A673 (cell line): ENCODE measurements at regions of chr10 and their contacts with region 1.

Region 1: DNA sequence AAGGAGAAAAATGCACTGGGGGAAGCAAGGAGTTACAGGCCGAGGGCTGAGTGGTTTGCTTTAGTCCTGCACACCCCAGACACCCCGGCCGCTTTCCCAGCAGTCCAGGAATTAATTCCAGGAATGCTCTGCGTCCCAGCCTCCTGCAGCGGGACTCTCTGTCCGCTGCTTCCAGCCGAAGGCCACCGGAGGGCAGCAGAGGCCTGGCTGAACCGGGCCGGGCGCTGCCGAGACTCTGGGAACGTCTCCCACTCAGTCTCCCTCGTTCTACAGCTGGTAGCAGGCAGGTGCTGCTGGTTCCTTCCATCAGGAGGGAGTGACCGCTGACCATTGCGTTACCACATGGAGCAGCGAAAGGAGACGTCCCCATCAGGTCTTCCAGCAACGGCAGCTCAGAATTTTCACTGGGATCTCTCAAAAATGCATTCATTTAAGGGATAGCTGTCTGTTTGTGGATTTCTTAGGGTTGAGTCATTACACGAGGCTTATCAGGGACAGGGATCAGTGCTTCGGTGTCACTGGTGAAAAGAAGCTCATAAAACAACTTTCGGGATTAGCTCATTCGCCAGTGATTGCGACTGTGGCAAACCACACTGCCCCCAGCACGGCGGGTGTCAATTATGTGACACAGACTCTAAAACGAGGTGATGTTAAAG is 24.9 kb upstream of the PITRM1 start:
- DNase-seq: peak; percentile 83
- H3K4me3 ChIP-seq: peak overlapping the region; percentile 20
- H3K27ac ChIP-seq: no peak overlapping the region
- H3K4me1 ChIP-seq: peaks cover 11% of the 10 kb centered on the region
- H3K27me3 ChIP-seq: no peaks in the 10 kb centered on the region
- CTCF ChIP-seq: peak; percentile 91

Region 2: GRCh38 chr10:3231951-3232730 is 34.7 kb after region 1 on chr10:
- CTCF ChIA-PET with region 1: no interaction called
- POLR2A ChIA-PET with region 1: no interaction called
- intact Hi-C with region 1: no loop called
- DNase-seq: no peak
- H3K4me3 ChIP-seq: no peak overlapping the region
- H3K27ac ChIP-seq: no peak overlapping the region
- H3K4me1 ChIP-seq: peaks cover 9% of the 10 kb centered on the region
- H3K27me3 ChIP-seq: no peaks in the 10 kb centered on the region
- CTCF ChIP-seq: no peak; the same call in 1 of the 2 replicates

Region 3: GRCh38 chr10:3652886-3653285 is 455.4 kb after region 1 on chr10:
- CTCF ChIA-PET with region 1: no interaction called
- POLR2A ChIA-PET with region 1: no interaction called
- intact Hi-C with region 1: no loop called
- DNase-seq: no peak
- H3K4me3 ChIP-seq: no peak overlapping the region
- H3K27ac ChIP-seq: no peak overlapping the region
- H3K4me1 ChIP-seq: no peaks in the 10 kb centered on the region
- H3K27me3 ChIP-seq: no peaks in the 10 kb centered on the region
- CTCF ChIP-seq: no peak

Region 4: GRCh38 chr10:4270116-4270515 is 1072.6 kb after region 1 on chr10:
- CTCF ChIA-PET with region 1: no interaction called
- POLR2A ChIA-PET with region 1: no interaction called
- intact Hi-C with region 1: loop called (anchors 10 kb)
- DNase-seq: peak; percentile 23
- H3K4me3 ChIP-seq: no peak overlapping the region
- H3K27ac ChIP-seq: no peak overlapping the region
- H3K4me1 ChIP-seq: no peaks in the 10 kb centered on the region
- H3K27me3 ChIP-seq: no peaks in the 10 kb centered on the region
- CTCF ChIP-seq: no peak